HepG2 (cell line): ENCODE measurements at regions of chr9 and their contacts with region 1.

Region 1: GRCh38 chr9:131125128-131126058 is at the start of gene NUP214:
- DNase-seq: peak; percentile 92
- ATAC-seq: peak; percentile 96
- H3K4me3 ChIP-seq: peak within 1 kb of the TSS; percentile 82 to 98 (median 96)
- H3K27ac ChIP-seq: peak within 1 kb of the TSS; percentile 94
- H3K4me1 ChIP-seq: peaks cover 59% of the 10 kb centered on the region
- H3K27me3 ChIP-seq: peaks cover 0 to 6% of the 10 kb centered on the region in 2 experiments; a peak in 1 of 5 replicates
- CTCF ChIP-seq: peak; percentile 29
- EP300 ChIP-seq: peak in 1 of 2 experiments; percentile 55; a peak in 2 of 4 replicates
- POLR2A ChIP-seq: peak; percentile 92 to 95
- RAD21 ChIP-seq: peak; percentile 39; the same call in 1 of the 2 replicates
- total RNA-seq, gene NUP214: 16.0 and 30.5 TPM in 2 replicates

Region 2: GRCh38 chr9:131053896-131054295 is 71.5 kb before region 1 on chr9:
- CTCF ChIA-PET with region 1: no interaction called
- POLR2A ChIA-PET with region 1: interaction called, 5 read pairs
- in situ Hi-C with region 1: no loop called
- intact Hi-C with region 1: loop called (anchors 2 kb)
- DNase-seq: no peak
- ATAC-seq: no peak
- H3K4me3 ChIP-seq: no peak overlapping the region
- H3K27ac ChIP-seq: no peak overlapping the region
- H3K4me1 ChIP-seq: peaks cover 5% of the 10 kb centered on the region; the same call in 1 of the 2 replicates
- H3K27me3 ChIP-seq: peaks cover 3 to 50% of the 10 kb centered on the region in 2 experiments; a peak in 2 of 5 replicates
- CTCF ChIP-seq: no peak
- EP300 ChIP-seq: no peak
- POLR2A ChIP-seq: no peak
- RAD21 ChIP-seq: no peak

Region 3: DNA sequence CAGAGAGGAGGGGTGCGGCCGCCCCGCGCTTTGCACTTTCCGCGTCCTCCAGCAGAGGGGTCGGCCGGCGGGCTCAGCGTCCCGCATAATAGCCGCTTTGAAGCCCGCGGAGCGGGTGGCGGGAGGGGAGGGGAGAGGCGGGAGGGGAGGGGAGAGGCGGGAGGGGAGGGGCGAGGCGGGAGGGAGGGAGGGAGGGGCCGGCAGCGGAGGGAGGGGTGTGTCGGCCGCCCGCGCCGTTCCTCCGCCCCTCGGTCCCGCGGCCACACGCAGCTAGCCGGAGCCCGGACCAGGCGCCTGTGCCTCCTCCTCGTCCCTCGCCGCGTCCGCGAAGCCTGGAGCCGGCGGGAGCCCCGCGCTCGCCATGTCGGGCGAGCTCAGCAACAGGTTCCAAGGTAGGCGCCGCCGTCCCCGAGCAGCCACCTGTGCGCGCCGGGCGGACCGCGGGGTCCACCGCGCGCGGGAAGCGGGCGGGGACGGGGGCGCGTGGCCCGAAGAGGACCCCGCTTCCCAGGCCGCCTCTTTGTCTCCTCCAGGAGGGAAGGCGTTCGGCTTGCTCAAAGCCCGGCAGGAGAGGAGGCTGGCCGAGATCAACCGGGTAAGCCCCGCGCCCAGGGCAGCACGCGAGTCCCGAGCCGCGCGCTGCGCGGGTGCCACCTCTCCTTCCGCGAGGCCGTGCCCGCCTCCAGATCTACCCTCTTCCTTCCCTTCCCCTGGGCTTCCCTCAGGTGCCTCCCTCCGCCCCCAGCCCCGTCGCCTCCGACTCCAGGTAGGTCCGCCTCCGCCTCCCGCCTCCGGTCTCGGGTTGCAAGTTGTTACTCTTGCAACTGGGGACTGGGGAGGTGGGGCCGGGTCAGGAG is 28.9 kb before region 1 on chr9 and contains the start of gene AIF1L:
- CTCF ChIA-PET with region 1: no interaction called
- POLR2A ChIA-PET with region 1: interaction called, 19 read pairs
- in situ Hi-C with region 1: no loop called
- intact Hi-C with region 1: no loop called
- DNase-seq: peak; percentile 56
- ATAC-seq: peak; percentile 76
- H3K4me3 ChIP-seq: peak within 1 kb of the TSS; percentile 57 to 91 (median 77); a peak in 5 of 6 replicates
- H3K27ac ChIP-seq: no peak within 1 kb of the TSS
- H3K4me1 ChIP-seq: peaks cover 30% of the 10 kb centered on the region
- H3K27me3 ChIP-seq: peaks cover 2 to 50% of the 10 kb centered on the region in 2 experiments; a peak in 4 of 5 replicates
- CTCF ChIP-seq: peak; percentile 50
- EP300 ChIP-seq: no peak
- POLR2A ChIP-seq: peak in 1 of 2 experiments; percentile 52; a peak in 1 of 4 replicates
- RAD21 ChIP-seq: no peak
- total RNA-seq, gene AIF1L: 36.5 and 42.7 TPM in 2 replicates

Region 4: DNA sequence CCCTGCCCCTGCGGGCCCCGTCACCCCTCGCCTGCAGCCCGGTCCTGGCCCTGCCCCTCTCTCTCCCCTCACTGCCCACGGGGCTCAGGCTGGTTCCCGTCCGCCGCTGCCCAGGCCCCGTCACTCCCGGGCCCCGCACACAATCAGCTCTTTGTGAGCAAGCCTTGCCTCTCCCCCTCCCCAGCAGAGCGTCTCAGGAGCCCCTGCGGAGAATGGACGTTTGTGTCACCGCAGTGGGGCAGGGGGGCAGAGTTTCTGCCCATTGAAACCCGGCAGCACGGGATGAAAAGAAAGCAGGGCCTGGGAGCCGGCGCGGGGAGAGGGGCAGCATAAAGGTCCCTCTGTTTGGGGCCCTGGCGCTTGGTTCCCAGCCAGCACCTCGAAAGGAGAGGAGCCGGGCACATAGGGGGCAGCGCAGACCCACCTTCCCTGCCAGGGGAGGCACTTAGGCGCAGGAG is 13.5 kb before region 1 on chr9:
- CTCF ChIA-PET with region 1: no interaction called
- POLR2A ChIA-PET with region 1: interaction called, 15 read pairs
- in situ Hi-C with region 1: no loop called
- intact Hi-C with region 1: no loop called
- DNase-seq: peak; percentile 70
- ATAC-seq: peak; percentile 69
- H3K4me3 ChIP-seq: peak overlapping the region in 1 of 3 experiments; percentile 7; a peak in 1 of 6 replicates
- H3K27ac ChIP-seq: peak overlapping the region; percentile 33
- H3K4me1 ChIP-seq: peaks cover 17% of the 10 kb centered on the region
- H3K27me3 ChIP-seq: peaks cover 0 to under 1% of the 10 kb centered on the region in 2 experiments; a peak in 1 of 5 replicates
- CTCF ChIP-seq: peak; percentile 39; the same call in 1 of the 2 replicates
- EP300 ChIP-seq: no peak
- POLR2A ChIP-seq: no peak
- RAD21 ChIP-seq: no peak